Activated CD8-positive, alpha-beta T cell treated with anti-CD3 and anti-CD28 coated beads for 36 hours (primary cell): ENCODE measurements at regions of chr12 and their contacts with region 1.

Region 1: DNA sequence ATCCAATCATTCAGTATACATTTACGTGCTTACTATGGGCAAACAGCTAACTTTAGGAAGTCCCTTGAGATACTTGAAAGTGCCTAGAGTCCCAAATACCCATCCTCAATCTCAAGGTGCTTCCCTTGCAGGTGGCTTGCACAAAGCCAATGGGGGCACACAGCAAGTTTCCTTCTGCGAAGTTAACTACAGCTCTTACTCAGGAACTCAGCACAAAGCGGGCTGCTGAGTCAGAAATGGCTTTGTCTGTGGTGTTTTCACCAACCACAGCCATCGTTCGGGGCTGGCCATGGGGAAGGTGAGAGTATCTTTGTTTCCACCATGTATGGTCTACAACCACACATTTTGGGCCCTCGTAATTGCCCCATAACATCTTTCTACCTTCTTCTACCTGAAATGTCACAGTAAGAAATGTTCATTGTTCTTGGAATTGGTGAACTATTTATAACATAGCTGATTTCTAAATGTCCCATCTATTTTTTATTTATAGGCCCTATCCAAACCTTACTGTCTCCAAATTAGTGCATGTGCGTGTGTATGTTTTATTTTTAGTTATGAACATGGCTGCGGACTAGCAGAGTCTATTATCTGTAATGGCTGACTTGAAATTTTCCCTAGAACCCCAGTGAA is 13.9 kb downstream of the MFAP5 start:
- DNase-seq: peak; percentile 94
- ATAC-seq: peak; percentile 76
- H3K4me3 Mint-ChIP-seq: no peak overlapping the region
- H3K27ac Mint-ChIP-seq: peak overlapping the region; percentile 66
- H3K4me1 Mint-ChIP-seq: peaks cover 56% of the 10 kb centered on the region
- H3K27me3 Mint-ChIP-seq: peaks cover 10% of the 10 kb centered on the region
- CTCF ChIP-seq: no peak

Region 2: GRCh38 chr12:8493084-8493483 is 155.6 kb before region 1 on chr12:
- CTCF ChIA-PET with region 1: no interaction called
- POLR2A ChIA-PET with region 1: no interaction called
- intact Hi-C with region 1: loop called (anchors 2 kb)
- DNase-seq: peak; percentile 82
- ATAC-seq: peak; percentile 91
- H3K4me3 Mint-ChIP-seq: peak overlapping the region; percentile 2
- H3K27ac Mint-ChIP-seq: peak overlapping the region; percentile 66
- H3K4me1 Mint-ChIP-seq: peaks cover 28% of the 10 kb centered on the region
- H3K27me3 Mint-ChIP-seq: peaks cover 11% of the 10 kb centered on the region
- CTCF ChIP-seq: no peak

Region 3: DNA sequence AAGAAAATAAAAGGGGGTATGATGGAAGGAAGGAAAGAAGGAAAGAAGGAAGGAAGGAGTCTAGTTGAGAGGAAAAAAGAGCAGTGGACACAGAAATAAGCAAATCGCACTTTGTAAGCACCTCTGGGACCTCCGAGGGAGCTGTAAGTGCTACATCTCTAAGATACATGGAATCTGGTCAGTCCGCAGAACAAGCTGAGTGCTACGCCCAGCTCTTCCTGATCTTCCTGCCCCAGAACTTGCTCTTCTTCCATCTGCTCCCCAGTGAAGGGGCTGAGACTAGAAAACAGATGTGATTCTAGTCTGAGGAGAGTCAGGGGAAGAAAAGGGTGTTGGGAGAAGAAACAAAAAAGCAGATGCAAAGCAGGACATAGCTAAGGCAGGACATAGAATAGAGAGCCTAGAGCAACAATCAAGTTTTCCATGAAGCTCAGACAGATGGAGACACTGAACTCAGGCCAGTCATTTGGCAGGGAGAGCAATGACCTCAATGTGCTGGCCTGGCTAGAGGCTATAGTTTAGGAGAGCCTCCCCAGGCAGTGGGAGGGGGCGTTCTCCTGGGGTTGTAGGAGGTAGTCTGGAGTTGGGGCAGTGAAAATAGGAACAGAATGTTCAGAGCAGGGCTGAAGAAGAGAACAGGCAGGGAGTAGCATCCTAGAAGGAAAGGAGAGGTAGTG is 15.7 kb after region 1 on chr12:
- CTCF ChIA-PET with region 1: no interaction called
- POLR2A ChIA-PET with region 1: no interaction called
- intact Hi-C with region 1: no loop called
- DNase-seq: no peak
- ATAC-seq: no peak
- H3K4me3 Mint-ChIP-seq: no peak overlapping the region
- H3K27ac Mint-ChIP-seq: no peak overlapping the region
- H3K4me1 Mint-ChIP-seq: no peaks in the 10 kb centered on the region
- H3K27me3 Mint-ChIP-seq: peaks cover 4% of the 10 kb centered on the region
- CTCF ChIP-seq: no peak